Vagina (tissue), 2 donors: ENCODE measurements at regions of chr4 and their contacts with region 1.

Region 1: GRCh38 chr4:133355633-133356032 is 206.5 kb downstream of the PCDH10 start:
- DNase-seq: no peak
- H3K4me3 ChIP-seq: no peak overlapping the region
- H3K27ac ChIP-seq: no peak overlapping the region
- H3K4me1 ChIP-seq: no peaks in the 10 kb centered on the region
- H3K27me3 ChIP-seq: no peaks in the 10 kb centered on the region
- CTCF ChIP-seq: no peak
- POLR2A ChIP-seq: no peak

Region 2: GRCh38 chr4:133188433-133189175 is 167.0 kb before region 1 on chr4:
- intact Hi-C with region 1: no loop called
- DNase-seq: no peak
- H3K4me3 ChIP-seq: no peak overlapping the region
- H3K27ac ChIP-seq: no peak overlapping the region
- H3K4me1 ChIP-seq: no peaks in the 10 kb centered on the region
- H3K27me3 ChIP-seq: no peaks in the 10 kb centered on the region
- CTCF ChIP-seq: no peak
- POLR2A ChIP-seq: no peak

Region 3: GRCh38 chr4:133372699-133373098 is 17.1 kb after region 1 on chr4:
- intact Hi-C with region 1: loop called (anchors 1 kb)
- DNase-seq: no peak
- H3K4me3 ChIP-seq: no peak overlapping the region
- H3K27ac ChIP-seq: no peak overlapping the region
- H3K4me1 ChIP-seq: no peaks in the 10 kb centered on the region
- H3K27me3 ChIP-seq: no peaks in the 10 kb centered on the region
- CTCF ChIP-seq: no peak
- POLR2A ChIP-seq: no peak